A673 (cell line): ENCODE measurements at regions of chr1 and their contacts with region 1.

Region 1: DNA sequence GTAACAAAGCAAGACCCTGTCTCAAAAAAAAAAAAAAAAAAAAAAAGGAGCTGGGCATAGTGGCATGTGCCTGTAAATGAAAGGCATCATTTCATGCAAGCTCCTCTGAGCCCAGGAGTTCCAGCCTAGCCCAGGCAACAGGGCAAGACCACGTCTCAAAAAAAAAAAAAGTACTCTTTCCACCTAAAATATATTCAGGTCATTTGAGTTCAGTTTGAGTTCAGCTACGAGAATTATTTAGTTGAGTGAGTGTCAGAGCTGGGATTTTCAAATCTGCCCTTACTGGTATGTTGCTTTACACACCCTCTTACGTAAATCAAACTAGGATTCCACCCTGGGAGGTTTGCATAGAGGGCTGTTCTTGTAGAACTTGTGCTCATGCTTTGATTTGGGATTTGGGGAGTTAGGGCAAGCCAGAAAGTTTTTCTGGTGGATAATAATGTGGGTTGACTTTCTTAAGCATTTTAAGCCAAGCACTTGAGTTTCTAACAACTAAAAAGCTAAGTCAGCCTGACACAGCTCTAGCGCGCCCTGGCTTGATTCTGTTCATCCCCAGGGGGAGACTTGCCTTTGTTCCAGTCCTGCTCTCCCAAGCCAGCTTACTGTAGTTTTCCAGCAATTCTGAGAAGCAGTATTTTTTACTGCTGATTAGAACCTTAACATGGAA is 11.3 kb upstream of the PGD start:
- DNase-seq: peak; percentile 81
- H3K4me3 ChIP-seq: peak overlapping the region; percentile 15
- H3K27ac ChIP-seq: peak overlapping the region; percentile 92
- H3K4me1 ChIP-seq: peaks cover 15% of the 10 kb centered on the region
- H3K27me3 ChIP-seq: no peaks in the 10 kb centered on the region
- CTCF ChIP-seq: no peak; the same call in 1 of the 2 replicates

Region 2: DNA sequence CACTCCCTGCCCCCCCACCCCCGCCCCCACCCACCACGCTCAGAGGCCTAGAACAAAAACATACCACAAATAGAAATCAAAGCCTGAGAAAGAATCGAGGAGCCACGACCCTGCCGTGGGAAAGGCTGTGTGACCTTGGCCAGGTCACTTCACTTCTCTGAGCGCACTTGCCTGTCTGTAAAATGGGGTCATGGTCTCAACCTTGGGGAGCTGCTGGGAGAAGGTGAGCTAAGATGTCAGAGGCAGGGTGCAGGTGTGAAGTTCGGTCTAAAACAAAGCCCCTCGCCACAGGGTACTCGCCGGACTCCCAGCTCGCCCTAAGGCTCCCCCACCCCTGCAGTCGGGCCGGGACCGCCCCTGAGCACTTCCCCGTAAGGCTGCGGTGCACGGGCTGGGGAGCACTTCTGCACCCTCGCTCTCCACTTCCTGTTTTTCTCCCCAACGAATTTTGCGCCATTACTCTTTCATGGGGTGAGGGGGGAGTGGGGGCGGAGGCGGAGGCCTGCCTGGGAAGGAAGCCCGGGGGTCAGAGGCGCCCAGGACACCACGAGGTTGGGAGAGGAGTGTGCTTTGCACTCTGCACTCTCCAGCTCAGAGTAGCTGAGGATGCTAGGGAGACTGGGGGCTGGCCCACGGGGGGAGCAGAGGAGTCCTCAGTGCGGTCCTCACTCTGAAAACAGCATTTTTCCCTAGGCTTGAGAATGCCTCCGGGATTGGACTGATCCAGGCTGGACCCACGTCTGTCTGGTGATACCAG is 757.9 kb before region 1 on chr1:
- CTCF ChIA-PET with region 1: interaction called, 11 read pairs
- POLR2A ChIA-PET with region 1: no interaction called
- intact Hi-C with region 1: no loop called
- DNase-seq: no peak
- H3K4me3 ChIP-seq: no peak overlapping the region
- H3K27ac ChIP-seq: no peak overlapping the region
- H3K4me1 ChIP-seq: no peaks in the 10 kb centered on the region
- H3K27me3 ChIP-seq: no peaks in the 10 kb centered on the region
- CTCF ChIP-seq: no peak

Region 3: GRCh38 chr1:10398734-10399623 is 11.4 kb after region 1 on chr1 and contains the start of gene PGD:
- CTCF ChIA-PET with region 1: no interaction called
- POLR2A ChIA-PET with region 1: interaction called, 6 read pairs
- intact Hi-C with region 1: loop called (anchors 1 kb)
- DNase-seq: peak; percentile 100
- H3K4me3 ChIP-seq: peak within 1 kb of the TSS; percentile 95
- H3K27ac ChIP-seq: peak within 1 kb of the TSS; percentile 94
- H3K4me1 ChIP-seq: peaks cover 18% of the 10 kb centered on the region
- H3K27me3 ChIP-seq: no peaks in the 10 kb centered on the region
- CTCF ChIP-seq: no peak
- total RNA-seq, gene PGD: 423 and 451 TPM in 2 replicates